ENCODE measurements at regions of chr1 and their contacts with region 1.

Region 1: GRCh38 chr1:147177611-147178380 is 5.5 kb upstream of the PRKAB2 start:
- DNase-seq: peak; percentile 27
- ATAC-seq: no peak
- H3K4me3 Mint-ChIP-seq: peak overlapping the region; percentile 5
- H3K27ac Mint-ChIP-seq: no peak overlapping the region
- H3K4me1 Mint-ChIP-seq: peaks cover 9% of the 10 kb centered on the region
- H3K27me3 Mint-ChIP-seq: no peaks in the 10 kb centered on the region

Region 2: DNA sequence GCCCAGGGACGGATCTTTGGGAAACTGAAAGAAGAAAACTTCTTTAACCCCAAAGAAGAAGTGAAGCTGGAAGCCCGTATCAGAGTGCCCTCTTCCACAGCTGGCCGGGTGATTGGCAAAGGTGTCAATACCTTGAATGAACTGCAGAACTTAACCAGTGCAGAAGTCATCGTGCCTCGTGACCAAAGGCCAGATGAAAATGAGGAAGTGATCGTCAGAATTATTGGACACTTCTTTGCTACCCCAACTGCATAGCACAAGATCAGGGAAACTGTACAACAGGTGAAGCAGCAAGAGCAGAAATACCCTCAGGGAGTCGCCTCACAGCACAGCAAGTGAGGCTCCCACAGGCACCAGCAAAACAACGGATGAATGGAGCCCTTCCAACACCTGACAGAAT is 125.7 kb before region 1 on chr1:
- CTCF ChIA-PET with region 1: no interaction called
- POLR2A ChIA-PET with region 1: no interaction called
- intact Hi-C with region 1: no loop called
- DNase-seq: no peak
- ATAC-seq: no peak
- H3K4me3 Mint-ChIP-seq: no peak overlapping the region
- H3K27ac Mint-ChIP-seq: no peak overlapping the region
- H3K4me1 Mint-ChIP-seq: peaks cover 8% of the 10 kb centered on the region
- H3K27me3 Mint-ChIP-seq: peaks cover 5% of the 10 kb centered on the region

Region 3: GRCh38 chr1:147162093-147162492 is 15.7 kb before region 1 on chr1:
- CTCF ChIA-PET with region 1: interaction called, 5 read pairs
- POLR2A ChIA-PET with region 1: no interaction called
- intact Hi-C with region 1: loop called in 1 of 2 experiments (anchors 2 kb)
- DNase-seq: no peak
- ATAC-seq: no peak
- H3K4me3 Mint-ChIP-seq: no peak overlapping the region
- H3K27ac Mint-ChIP-seq: no peak overlapping the region
- H3K4me1 Mint-ChIP-seq: no peaks in the 10 kb centered on the region
- H3K27me3 Mint-ChIP-seq: no peaks in the 10 kb centered on the region

Measured in activated CD4-positive, alpha-beta T cell treated with anti-CD3 and anti-CD28 coated beads for 36 hours (primary cell).